ENCODE measurements at regions of chr6 and their contacts with region 1.

Region 1: GRCh38 chr6:474453-475185 is 83.1 kb downstream of the IRF4 start:
- DNase-seq: peak; percentile 59
- ATAC-seq: peak; percentile 94
- H3K4me3 ChIP-seq: no peak overlapping the region
- H3K27ac ChIP-seq: no peak overlapping the region
- H3K4me1 ChIP-seq: peaks cover 36% of the 10 kb centered on the region
- H3K27me3 ChIP-seq: no peaks in the 10 kb centered on the region
- CTCF ChIP-seq: no peak
- EP300 ChIP-seq: no peak
- POLR2A ChIP-seq: no peak
- RAD21 ChIP-seq: no peak

Region 2: DNA sequence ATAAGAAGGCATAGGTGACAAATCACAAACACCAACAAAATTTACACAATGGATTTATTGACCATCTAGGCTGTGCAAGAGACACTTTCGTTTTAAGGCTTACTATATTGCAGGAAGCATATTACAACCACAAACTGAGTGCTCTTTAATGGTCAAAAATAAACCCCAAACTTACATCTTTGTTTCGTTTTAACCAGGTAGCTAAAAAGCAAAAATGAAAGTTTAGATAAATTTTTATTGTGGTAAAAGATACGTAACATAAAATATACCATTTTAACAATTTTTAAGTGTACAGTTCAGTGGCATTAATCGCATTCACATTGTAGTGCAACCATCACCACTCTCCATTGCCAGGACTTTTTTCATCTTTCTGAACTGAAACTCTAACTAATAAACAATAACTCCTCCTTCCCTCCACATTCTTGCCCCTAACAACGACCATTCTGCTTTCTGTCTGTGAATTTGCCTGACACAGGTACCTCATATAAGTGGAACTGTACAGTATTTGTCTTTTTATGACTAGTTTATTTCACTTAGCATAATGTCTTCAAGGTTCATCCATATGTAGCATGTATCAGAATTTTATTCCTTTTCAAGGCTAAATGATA is 214.6 kb before region 1 on chr6:
- CTCF ChIA-PET with region 1: no interaction called
- POLR2A ChIA-PET with region 1: no interaction called
- RAD21 ChIA-PET with region 1: no interaction called
- SMC1A ChIA-PET with region 1: no interaction called
- in situ Hi-C with region 1: no loop called
- intact Hi-C with region 1: no loop called
- DNase-seq: peak; percentile 77
- ATAC-seq: peak; percentile 91
- H3K4me3 ChIP-seq: peak overlapping the region; percentile 20
- H3K27ac ChIP-seq: peak overlapping the region; percentile 82
- H3K4me1 ChIP-seq: peaks cover 37% of the 10 kb centered on the region
- H3K27me3 ChIP-seq: no peaks in the 10 kb centered on the region
- CTCF ChIP-seq: no peak
- EP300 ChIP-seq: no peak
- POLR2A ChIP-seq: no peak
- RAD21 ChIP-seq: no peak

Region 3: GRCh38 chr6:431986-432385 is 42.6 kb before region 1 on chr6:
- CTCF ChIA-PET with region 1: interaction called, 8 read pairs
- POLR2A ChIA-PET with region 1: interaction called, 4 read pairs
- RAD21 ChIA-PET with region 1: interaction called, 7 read pairs
- SMC1A ChIA-PET with region 1: interaction called, 10 read pairs
- in situ Hi-C with region 1: no loop called
- intact Hi-C with region 1: loop called (anchors 5 kb)
- DNase-seq: no peak
- ATAC-seq: no peak
- H3K4me3 ChIP-seq: no peak overlapping the region
- H3K27ac ChIP-seq: no peak overlapping the region
- H3K4me1 ChIP-seq: peaks cover 35% of the 10 kb centered on the region
- H3K27me3 ChIP-seq: no peaks in the 10 kb centered on the region
- CTCF ChIP-seq: no peak
- EP300 ChIP-seq: no peak
- POLR2A ChIP-seq: no peak
- RAD21 ChIP-seq: no peak

Region 4: GRCh38 chr6:490251-491037 is 15.8 kb after region 1 on chr6:
- CTCF ChIA-PET with region 1: interaction called, 11 read pairs
- POLR2A ChIA-PET with region 1: interaction called, 6 read pairs
- RAD21 ChIA-PET with region 1: interaction called, 24 read pairs
- SMC1A ChIA-PET with region 1: interaction called, 22 read pairs
- in situ Hi-C with region 1: no loop called
- intact Hi-C with region 1: no loop called
- DNase-seq: peak; percentile 39
- ATAC-seq: peak; percentile 82
- H3K4me3 ChIP-seq: no peak overlapping the region
- H3K27ac ChIP-seq: peak overlapping the region; percentile 22; the same call in 1 of the 2 replicates
- H3K4me1 ChIP-seq: peaks cover 33% of the 10 kb centered on the region
- H3K27me3 ChIP-seq: no peaks in the 10 kb centered on the region
- CTCF ChIP-seq: no peak
- EP300 ChIP-seq: no peak
- POLR2A ChIP-seq: no peak
- RAD21 ChIP-seq: no peak

Region 5: DNA sequence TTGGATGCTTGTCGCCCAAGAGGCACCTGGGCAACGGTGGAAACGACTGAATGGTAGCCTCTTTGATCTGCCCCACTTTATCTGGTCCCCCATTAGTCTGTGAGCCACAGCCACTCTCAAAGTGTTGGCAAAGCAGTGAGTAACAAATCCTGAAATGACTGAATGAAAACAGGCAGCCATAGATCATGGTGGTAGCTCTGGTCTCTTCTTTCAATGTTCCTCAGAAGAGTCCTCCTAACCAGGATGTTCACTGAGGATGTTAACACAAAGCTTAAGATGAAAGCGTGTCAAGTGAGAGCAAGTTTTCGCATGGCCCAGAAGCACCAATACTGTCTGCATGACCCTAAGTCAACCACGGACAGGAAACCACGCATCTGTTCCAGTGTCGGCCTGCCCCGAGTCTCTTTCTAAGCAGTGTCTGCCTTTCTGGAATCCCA is 24.2 kb after region 1 on chr6:
- CTCF ChIA-PET with region 1: interaction called, 5 read pairs
- POLR2A ChIA-PET with region 1: interaction called, 3 read pairs
- RAD21 ChIA-PET with region 1: interaction called, 10 read pairs
- SMC1A ChIA-PET with region 1: interaction called, 20 read pairs
- in situ Hi-C with region 1: no loop called
- intact Hi-C with region 1: no loop called
- DNase-seq: peak; percentile 69
- ATAC-seq: peak; percentile 77
- H3K4me3 ChIP-seq: peak overlapping the region; percentile 31; the same call in 1 of the 2 replicates
- H3K27ac ChIP-seq: peak overlapping the region; percentile 78
- H3K4me1 ChIP-seq: peaks cover 36% of the 10 kb centered on the region
- H3K27me3 ChIP-seq: no peaks in the 10 kb centered on the region
- CTCF ChIP-seq: no peak
- EP300 ChIP-seq: no peak
- POLR2A ChIP-seq: no peak
- RAD21 ChIP-seq: no peak

Measured in GM12878 (cell line).